Upper lobe of right lung (tissue), 1 donor: ENCODE measurements at regions of chr6 and their contacts with region 1.

Region 1: GRCh38 chr6:111483736-111484632 is 966 bp upstream of the REV3L start:
- DNase-seq: peak; percentile 95
- ATAC-seq: peak; percentile 89
- H3K4me3 ChIP-seq: peak overlapping the region; percentile 71
- H3K27ac ChIP-seq: peak overlapping the region; percentile 97
- H3K4me1 ChIP-seq: peaks cover 26% of the 10 kb centered on the region
- H3K27me3 ChIP-seq: no peaks in the 10 kb centered on the region
- CTCF ChIP-seq: no peak

Region 2: DNA sequence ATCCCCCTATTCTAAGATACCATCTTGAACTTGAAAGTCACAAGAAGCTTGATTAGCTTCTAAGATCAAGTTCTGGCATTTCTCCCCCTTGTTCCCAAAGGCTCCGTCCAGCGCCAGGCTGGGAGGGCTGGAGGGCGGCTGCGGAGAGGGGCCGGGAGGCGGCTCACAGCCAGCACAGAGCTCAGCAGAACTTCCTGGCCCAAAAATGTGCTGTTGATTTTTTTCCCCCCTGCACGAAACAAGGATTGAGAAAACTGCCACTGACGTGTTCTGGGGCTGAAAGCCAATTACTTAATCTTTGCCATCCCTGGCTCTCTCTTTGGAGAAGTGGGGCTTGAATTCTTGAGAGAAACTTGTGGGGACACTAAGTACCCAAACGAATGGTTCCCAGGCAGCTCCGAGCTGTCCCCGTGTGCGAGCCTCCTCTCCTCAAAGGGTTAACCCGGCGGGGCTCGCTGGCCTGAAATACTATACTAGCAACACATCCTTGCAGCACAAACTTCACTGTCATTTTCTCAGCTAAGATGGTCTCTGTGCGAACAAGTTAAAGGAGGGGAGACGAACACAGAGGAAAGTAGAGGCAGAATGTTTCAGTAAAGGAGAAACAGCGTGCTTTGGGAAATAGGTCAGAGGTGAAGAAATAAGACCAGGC is 121.2 kb after region 1 on chr6:
- intact Hi-C with region 1: loop called (anchors 10 kb)
- DNase-seq: peak; percentile 82
- ATAC-seq: peak; percentile 72
- H3K4me3 ChIP-seq: peak overlapping the region; percentile 68
- H3K27ac ChIP-seq: peak overlapping the region; percentile 97
- H3K4me1 ChIP-seq: peaks cover 59% of the 10 kb centered on the region
- H3K27me3 ChIP-seq: no peaks in the 10 kb centered on the region
- CTCF ChIP-seq: no peak

Region 3: DNA sequence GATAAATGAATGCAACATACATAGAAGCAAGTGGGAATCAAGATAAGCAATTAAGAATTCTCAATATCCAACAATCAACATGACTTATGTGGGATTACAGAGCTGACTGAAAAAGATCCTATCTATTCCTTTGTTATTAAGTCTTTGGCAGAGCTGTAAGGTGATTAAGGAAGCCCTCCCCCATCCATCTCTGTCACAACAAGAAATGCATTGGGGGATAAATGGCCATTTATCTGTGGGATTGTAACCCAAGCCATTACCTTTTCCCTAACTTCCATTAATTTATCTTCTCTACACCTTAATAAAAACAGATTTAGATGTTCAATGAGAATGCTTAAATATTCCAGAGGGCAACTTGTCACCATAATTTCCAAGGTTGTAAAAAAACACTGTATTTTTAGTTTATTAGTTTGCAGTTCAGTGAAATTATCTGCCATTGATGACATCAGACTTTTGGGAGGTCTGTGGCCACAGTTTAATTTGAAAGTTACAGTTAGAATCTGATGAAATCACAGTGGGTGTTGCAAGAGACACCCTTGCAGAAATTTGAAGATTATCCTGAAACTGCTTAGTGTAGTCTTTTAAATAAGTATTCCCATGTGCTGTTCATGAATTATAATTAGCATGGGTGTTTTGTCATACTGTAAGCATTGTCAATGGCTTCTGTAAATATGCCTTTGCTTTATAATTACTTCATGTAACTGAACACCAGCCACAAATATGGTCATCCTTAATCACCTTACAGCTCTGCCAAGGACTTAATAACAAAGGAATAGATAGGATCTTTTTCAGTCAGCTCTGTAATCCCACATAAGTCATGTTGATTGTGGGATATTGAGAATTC is 438.7 kb after region 1 on chr6:
- intact Hi-C with region 1: no loop called
- DNase-seq: no peak
- ATAC-seq: no peak
- H3K4me3 ChIP-seq: no peak overlapping the region
- H3K27ac ChIP-seq: no peak overlapping the region
- H3K4me1 ChIP-seq: no peaks in the 10 kb centered on the region
- H3K27me3 ChIP-seq: no peaks in the 10 kb centered on the region
- CTCF ChIP-seq: no peak